Activated CD8-positive, alpha-beta T cell treated with anti-CD3 and anti-CD28 coated beads, Interleukin-2, amount 10 ng/mL, durations not matched to agents 7 days and 5 days (primary cell): ENCODE measurements at regions of chrX and their contacts with region 1.

Region 1: DNA sequence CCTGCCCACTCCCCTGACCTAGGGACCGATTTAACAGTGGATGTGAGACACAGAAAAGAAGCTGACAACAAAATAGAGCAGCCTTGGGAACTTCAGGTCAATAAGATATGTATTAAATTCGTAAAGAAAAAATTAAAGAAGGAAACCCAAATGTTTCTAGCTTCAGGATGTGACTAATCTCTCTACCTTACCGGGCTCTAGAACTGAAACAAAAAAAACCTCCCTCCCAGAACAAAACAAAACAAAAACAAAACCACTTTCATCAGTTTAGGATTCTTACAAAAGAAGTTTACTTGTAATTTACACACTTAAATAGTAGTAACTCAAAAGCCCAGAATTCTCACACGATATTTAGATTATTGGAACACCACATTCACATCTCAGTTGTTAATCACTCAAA is 185.8 kb upstream of the RPS6KA3 start:
- DNase-seq: no peak
- ATAC-seq: peak; percentile 63
- H3K4me3 Mint-ChIP-seq: peak overlapping the region; percentile 38
- H3K27ac Mint-ChIP-seq: peak overlapping the region; percentile 89
- H3K4me1 Mint-ChIP-seq: peaks cover 54% of the 10 kb centered on the region
- H3K27me3 Mint-ChIP-seq: no peaks in the 10 kb centered on the region

Region 2: DNA sequence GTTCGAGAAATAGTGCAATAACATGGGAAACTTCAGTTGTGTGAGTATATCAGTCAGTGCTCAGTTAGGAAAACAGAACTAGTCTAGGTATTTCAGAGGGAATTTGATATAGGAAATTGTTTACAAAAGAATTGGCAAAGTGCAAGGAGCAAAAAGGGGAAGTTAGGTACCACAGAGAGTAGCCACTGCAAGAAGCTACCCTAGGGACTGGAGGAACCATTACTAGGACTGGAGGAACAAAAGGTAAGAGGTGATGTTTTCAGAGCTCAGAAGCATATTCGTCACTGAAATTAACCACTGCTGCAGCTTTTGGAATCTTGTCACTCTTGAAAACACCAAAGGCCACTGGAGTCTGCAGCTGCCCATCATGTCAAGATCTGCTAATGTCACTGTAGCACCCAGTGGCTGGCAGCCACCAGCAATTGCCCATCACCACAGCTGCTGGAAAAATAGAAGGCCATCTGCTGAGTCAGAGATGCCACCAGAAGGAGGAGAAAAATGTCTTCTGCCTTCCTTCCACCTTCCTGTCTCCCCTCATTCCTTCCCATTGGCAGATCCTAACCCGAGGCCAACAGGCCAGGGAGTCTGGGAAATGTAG is 25.2 kb before region 1 on chrX:
- CTCF ChIA-PET with region 1: no interaction called
- POLR2A ChIA-PET with region 1: no interaction called
- DNase-seq: no peak
- ATAC-seq: no peak
- H3K4me3 Mint-ChIP-seq: no peak overlapping the region
- H3K27ac Mint-ChIP-seq: no peak overlapping the region
- H3K4me1 Mint-ChIP-seq: peaks cover 4% of the 10 kb centered on the region
- H3K27me3 Mint-ChIP-seq: no peaks in the 10 kb centered on the region

Region 3: GRCh38 chrX:20463296-20464075 is 11.0 kb after region 1 on chrX:
- CTCF ChIA-PET with region 1: interaction called, 10 read pairs
- POLR2A ChIA-PET with region 1: no interaction called
- DNase-seq: no peak
- ATAC-seq: no peak
- H3K4me3 Mint-ChIP-seq: no peak overlapping the region
- H3K27ac Mint-ChIP-seq: peak overlapping the region; percentile 34
- H3K4me1 Mint-ChIP-seq: peaks cover 32% of the 10 kb centered on the region
- H3K27me3 Mint-ChIP-seq: no peaks in the 10 kb centered on the region